ENCODE measurements at regions of chr12 and their contacts with region 1.

Region 1: DNA sequence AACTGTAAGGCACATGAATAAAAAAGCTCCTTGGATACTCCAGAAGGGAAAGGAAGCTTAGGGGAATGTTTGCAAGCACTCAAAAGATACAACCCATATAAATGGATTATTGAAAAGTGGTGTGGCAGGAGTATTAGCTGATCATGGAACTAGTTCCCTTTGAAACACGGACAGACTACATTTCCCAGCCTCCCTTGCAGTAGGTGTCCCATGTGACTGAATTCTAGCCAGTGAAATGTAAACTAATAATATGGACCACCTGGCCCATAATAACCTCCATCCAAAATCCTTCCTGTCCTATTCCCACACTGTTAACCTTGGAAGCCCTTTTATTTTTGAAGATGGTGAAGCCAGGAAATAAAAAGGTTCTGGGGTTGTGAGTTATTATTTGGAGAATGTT is 242.3 kb downstream of the SUDS3 start:
- DNase-seq: no peak
- ATAC-seq: no peak
- H3K4me3 ChIP-seq: no peak overlapping the region
- H3K27ac ChIP-seq: no peak overlapping the region
- H3K4me1 ChIP-seq: no peaks in the 10 kb centered on the region
- H3K27me3 ChIP-seq: no peaks in the 10 kb centered on the region
- CTCF ChIP-seq: no peak
- POLR2A ChIP-seq: no peak

Region 2: GRCh38 chr12:118446244-118446643 is 172.4 kb before region 1 on chr12:
- intact Hi-C with region 1: loop called in 5 of 10 experiments (anchors 5 to 10 kb)
- DNase-seq: no peak
- ATAC-seq: no peak
- H3K4me3 ChIP-seq: no peak overlapping the region
- H3K27ac ChIP-seq: no peak overlapping the region
- H3K4me1 ChIP-seq: no peaks in the 10 kb centered on the region
- H3K27me3 ChIP-seq: peaks cover 0 to 2% (median 0%) of the 10 kb centered on the region in 9 donors
- CTCF ChIP-seq: peak in 7 of 12 donors; percentile 16 to 31 (median 23)
- POLR2A ChIP-seq: no peak

Region 3: DNA sequence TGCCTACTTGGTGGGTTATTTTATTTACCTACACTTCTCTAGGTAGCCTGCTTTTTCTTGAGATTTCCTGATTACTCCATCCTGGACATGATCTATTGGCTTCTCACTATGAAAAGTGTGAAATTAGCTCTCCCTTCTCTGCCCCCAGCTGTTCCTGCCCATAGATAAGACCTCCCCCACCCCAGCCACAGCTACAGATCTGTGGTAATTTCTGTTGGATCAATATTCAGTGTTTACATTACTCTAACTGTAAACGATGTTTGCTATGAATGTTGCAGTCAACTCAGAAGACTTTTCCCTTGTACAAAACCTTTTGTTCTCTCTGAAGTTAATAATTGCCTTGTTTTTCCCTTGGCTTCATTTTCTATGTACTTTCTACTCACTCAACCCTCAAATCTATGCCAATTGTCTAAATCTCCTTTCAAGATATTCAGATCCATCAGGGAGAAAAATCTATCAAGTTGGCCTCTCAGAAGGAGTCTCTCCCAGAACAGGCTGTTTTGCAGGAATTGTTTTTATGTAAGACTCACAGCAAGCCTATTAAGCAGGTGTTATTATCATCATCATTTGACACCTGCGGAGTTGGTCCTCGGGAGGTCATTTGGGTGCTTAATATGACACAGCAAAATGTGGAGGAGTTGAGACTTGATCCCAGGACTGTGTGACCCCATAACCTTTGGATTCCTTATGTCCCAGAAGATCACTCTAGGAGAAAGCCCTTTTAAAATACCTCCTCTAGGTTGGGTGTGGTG is 14.9 kb before region 1 on chr12:
- intact Hi-C with region 1: no loop called
- DNase-seq: no peak
- ATAC-seq: no peak
- H3K4me3 ChIP-seq: no peak overlapping the region
- H3K27ac ChIP-seq: no peak overlapping the region
- H3K4me1 ChIP-seq: no peaks in the 10 kb centered on the region
- H3K27me3 ChIP-seq: no peaks in the 10 kb centered on the region
- CTCF ChIP-seq: no peak
- POLR2A ChIP-seq: no peak